ENCODE measurements at regions of chr10 and their contacts with region 1.

Region 1: DNA sequence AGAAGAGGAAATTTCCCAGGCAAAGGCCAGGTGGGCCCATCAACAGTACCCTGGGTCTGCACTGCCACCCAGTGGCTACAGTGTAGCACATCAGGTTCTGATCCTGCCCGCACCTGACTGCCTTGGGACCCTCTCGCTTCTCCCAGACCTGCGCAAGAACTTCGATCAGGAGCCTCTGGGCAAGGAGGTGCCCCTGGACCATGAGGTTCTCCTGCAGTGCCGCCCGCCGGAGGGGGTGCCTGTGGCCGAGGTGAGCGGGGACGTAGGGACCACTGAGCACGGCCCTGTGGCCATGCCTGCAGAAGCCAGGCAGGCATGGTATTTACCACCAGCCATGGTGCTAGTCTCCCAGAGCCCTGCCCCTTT is 33.9 kb upstream of the SLC29A3 start:
- DNase-seq: peak; percentile 39 to 68
- ATAC-seq: peak; percentile 75 to 92
- H3K4me3 ChIP-seq: no peak overlapping the region
- H3K27ac ChIP-seq: no peak overlapping the region
- H3K4me1 ChIP-seq: no peaks in the 10 kb centered on the region
- CTCF ChIP-seq: peak; percentile 81
- EP300 ChIP-seq: no peak
- POLR2A ChIP-seq: no peak
- RAD21 ChIP-seq: peak; percentile 82 to 86

Region 2: DNA sequence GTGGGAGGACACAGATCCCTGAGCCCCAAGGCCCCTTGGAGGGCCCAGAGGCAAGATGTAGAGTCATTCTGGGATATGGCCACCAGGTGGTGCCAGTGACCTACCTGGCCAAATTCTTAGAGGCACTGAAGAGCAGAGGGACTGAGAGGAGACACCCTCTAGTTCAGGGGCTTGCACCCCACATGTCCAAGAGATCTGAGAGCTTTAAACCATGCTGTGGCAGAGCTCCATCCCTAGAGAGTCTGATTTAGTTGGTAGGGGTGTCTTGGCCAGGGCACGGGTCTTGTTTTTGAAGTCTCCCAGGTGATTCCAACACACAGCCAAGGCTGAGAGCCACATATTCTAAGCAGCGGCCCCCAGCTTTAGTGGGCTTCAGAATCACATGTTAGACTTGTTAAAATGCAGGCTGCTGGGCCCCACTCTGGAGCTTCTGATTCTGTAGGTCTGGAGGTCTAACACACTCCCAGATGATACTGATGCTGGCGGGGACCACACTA is 735.2 kb before region 1 on chr10:
- CTCF ChIA-PET with region 1: interaction called, 10 read pairs
- POLR2A ChIA-PET with region 1: no interaction called
- DNase-seq: peak; percentile 60 to 78
- ATAC-seq: peak; percentile 84 to 95
- H3K4me3 ChIP-seq: no peak overlapping the region
- H3K27ac ChIP-seq: no peak overlapping the region
- H3K4me1 ChIP-seq: no peaks in the 10 kb centered on the region
- CTCF ChIP-seq: peak; percentile 87
- EP300 ChIP-seq: no peak
- POLR2A ChIP-seq: no peak
- RAD21 ChIP-seq: peak; percentile 89

Region 3: GRCh38 chr10:70887804-70888800 is 397.1 kb before region 1 on chr10 and contains the start of gene PCBD1:
- CTCF ChIA-PET with region 1: interaction called, 14 read pairs
- POLR2A ChIA-PET with region 1: no interaction called
- DNase-seq: peak; percentile 77 to 81
- ATAC-seq: peak; percentile 92 to 93
- H3K4me3 ChIP-seq: peak within 1 kb of the TSS; percentile 87
- H3K27ac ChIP-seq: peak within 1 kb of the TSS; percentile 94 to 98
- H3K4me1 ChIP-seq: peaks cover 20% of the 10 kb centered on the region
- CTCF ChIP-seq: no peak
- EP300 ChIP-seq: no peak
- POLR2A ChIP-seq: peak; percentile 85
- RAD21 ChIP-seq: no peak
- polyA plus RNA-seq, gene PCBD1: 169 TPM in 2 replicates

Region 4: DNA sequence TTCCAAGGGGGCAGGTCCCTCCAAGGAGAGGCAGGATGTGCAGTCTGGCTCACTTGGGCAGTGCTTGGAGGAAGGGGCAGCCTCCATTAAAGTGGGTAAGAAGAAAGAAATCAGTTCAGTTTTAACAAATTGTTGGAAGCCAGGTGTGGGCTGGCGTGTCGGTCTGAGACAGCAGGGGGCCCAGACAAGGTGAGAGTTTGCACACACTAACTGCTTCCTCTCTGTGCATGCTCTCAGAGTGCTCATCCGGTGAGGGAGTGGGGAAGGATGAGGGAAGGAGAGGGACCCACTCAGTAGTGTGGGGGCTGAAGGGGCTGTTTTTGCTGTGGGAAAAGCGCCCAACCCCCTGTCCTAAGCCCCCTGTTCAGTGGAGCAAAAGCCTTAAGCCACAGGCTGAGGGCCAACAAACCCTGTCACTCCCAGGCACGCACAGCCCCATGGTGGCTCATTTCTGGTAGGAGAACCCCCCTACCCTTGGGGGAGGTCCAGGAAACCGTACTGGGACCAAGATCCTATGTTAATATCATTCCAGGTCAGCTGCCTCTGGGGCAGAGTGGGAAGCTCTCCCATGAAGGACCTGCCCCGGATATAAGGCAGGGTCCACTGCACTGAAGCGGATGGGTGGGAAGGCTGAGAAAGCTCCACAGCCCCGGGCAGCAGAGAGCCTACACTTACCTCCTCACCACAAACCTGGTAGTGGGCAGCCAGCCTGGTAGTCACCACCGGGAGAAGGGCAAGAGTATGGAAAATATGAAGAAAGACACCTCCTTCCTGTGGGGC is 391.7 kb before region 1 on chr10:
- CTCF ChIA-PET with region 1: interaction called, 362 read pairs
- POLR2A ChIA-PET with region 1: no interaction called
- DNase-seq: no peak
- ATAC-seq: no peak
- H3K4me3 ChIP-seq: no peak overlapping the region
- H3K27ac ChIP-seq: no peak overlapping the region
- H3K4me1 ChIP-seq: peaks cover 12% of the 10 kb centered on the region
- CTCF ChIP-seq: no peak
- EP300 ChIP-seq: no peak
- POLR2A ChIP-seq: no peak
- RAD21 ChIP-seq: no peak

Region 5: DNA sequence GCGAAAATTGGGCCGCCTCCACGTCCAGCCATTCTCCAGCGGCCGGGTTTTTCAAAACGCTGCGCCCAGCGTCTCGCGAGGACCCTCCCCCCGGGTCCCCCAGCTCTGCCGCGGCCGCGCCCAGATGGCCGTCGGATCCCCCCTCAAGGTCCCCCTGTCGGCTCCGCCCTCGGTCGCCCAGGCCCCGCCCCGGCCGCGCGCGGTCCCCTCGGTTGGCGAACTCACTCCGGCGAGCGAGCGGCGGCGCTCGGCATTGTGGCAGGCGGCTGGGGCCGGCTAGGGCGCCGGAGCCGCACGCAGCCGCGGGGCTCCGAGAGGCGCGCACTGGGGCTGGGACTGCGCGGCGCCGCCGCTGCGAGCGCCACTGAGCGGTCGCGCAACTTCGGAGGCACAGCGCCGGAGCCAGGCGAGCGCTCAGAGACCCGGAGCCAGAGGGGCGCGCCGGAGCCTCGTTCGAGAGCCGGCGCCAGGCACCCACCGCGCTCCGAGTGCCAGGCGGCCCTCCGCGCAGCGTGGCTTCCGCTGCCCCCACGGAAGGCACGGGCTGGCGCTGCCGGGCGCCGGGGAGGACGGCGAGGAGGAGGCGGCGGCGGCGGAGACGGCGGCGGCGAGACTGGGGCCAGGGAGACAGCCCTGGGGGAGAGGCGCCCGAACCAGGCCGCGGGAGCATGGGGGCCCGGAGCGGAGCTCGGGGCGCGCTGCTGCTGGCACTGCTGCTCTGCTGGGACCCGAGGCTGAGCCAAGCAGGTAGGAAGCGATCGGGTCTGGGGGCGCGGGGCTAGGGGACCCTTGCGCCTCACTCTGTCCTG is 72.6 kb before region 1 on chr10 and contains the start of gene UNC5B:
- CTCF ChIA-PET with region 1: interaction called, 13 read pairs
- POLR2A ChIA-PET with region 1: no interaction called
- DNase-seq: peak; percentile 37 to 80
- ATAC-seq: peak; percentile 68 to 81
- H3K4me3 ChIP-seq: peak within 1 kb of the TSS; percentile 60
- H3K27ac ChIP-seq: peak within 1 kb of the TSS; percentile 31 to 79; a peak in 4 of 6 replicates
- H3K4me1 ChIP-seq: peaks cover 16% of the 10 kb centered on the region; the same call in 1 of the 3 replicates
- CTCF ChIP-seq: peak; percentile 25; the same call in 1 of the 3 replicates
- EP300 ChIP-seq: no peak
- POLR2A ChIP-seq: peak; percentile 64
- RAD21 ChIP-seq: no peak
- polyA plus RNA-seq, gene UNC5B: 1.0 and 1.3 TPM in 2 replicates

Region 6: GRCh38 chr10:71270301-71271220 is 14.6 kb before region 1 on chr10:
- CTCF ChIA-PET with region 1: interaction called, 70 read pairs
- POLR2A ChIA-PET with region 1: no interaction called
- DNase-seq: peak; percentile 72 to 91
- ATAC-seq: peak; percentile 80 to 90
- H3K4me3 ChIP-seq: no peak overlapping the region
- H3K27ac ChIP-seq: no peak overlapping the region
- H3K4me1 ChIP-seq: peaks cover 17% of the 10 kb centered on the region; the same call in 2 of the 3 replicates
- CTCF ChIP-seq: peak; percentile 62
- EP300 ChIP-seq: no peak
- POLR2A ChIP-seq: no peak
- RAD21 ChIP-seq: peak; percentile 32 to 45; a peak in 4 of 5 replicates

Region 7: DNA sequence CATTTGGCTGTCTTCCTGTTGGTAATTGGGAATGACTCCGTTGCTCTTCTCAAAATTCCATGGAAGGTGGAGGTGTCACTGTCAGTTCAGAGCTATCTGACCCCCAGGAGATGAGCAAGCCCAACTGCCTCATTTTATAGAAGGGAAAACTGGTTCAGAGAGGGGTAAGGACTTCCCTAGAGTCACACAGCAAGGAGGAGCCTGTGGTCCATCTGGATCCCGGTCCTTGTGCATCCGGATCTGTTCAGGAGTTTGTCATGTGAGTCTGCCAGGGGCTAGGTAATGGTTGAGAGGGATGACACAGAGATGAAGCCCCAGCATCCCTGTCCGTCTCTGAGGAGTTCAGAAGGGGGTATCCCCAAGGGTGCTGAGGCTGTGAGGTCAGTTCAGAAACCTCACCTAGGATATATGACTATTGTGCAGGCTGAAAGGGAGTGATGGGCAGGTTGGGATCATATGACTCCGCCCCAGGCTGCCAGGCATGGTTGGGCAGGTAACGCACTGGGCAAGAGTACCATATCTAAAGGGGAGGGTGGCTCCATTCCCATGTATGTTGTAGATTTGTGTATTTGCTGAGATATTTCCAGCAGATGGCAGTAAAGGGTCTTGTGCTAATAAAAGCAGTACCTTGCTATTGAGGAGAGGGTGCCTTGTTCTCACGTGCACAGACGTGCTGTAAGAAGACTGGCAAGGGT is 17.9 kb after region 1 on chr10:
- CTCF ChIA-PET with region 1: interaction called, 16 read pairs
- POLR2A ChIA-PET with region 1: no interaction called
- DNase-seq: peak; percentile 73
- ATAC-seq: peak; percentile 75 to 90
- H3K4me3 ChIP-seq: no peak overlapping the region
- H3K27ac ChIP-seq: no peak overlapping the region
- H3K4me1 ChIP-seq: no peaks in the 10 kb centered on the region
- CTCF ChIP-seq: peak; percentile 56
- EP300 ChIP-seq: no peak
- POLR2A ChIP-seq: no peak
- RAD21 ChIP-seq: peak; percentile 37 to 52; a peak in 4 of 5 replicates

Region 8: GRCh38 chr10:71396084-71396720 is 111.0 kb after region 1 on chr10:
- CTCF ChIA-PET with region 1: no interaction called
- POLR2A ChIA-PET with region 1: no interaction called
- DNase-seq: peak; percentile 75 to 76
- ATAC-seq: peak; percentile 86 to 94
- H3K4me3 ChIP-seq: peak overlapping the region; percentile 58
- H3K27ac ChIP-seq: peak overlapping the region; percentile 71 to 91
- H3K4me1 ChIP-seq: peaks cover 7% of the 10 kb centered on the region; the same call in 1 of the 3 replicates
- CTCF ChIP-seq: peak; percentile 77
- EP300 ChIP-seq: no peak
- POLR2A ChIP-seq: no peak
- RAD21 ChIP-seq: peak; percentile 80 to 92

Region 9: GRCh38 chr10:71597821-71598498 is 312.8 kb after region 1 on chr10:
- CTCF ChIA-PET with region 1: no interaction called
- POLR2A ChIA-PET with region 1: no interaction called
- DNase-seq: no peak
- ATAC-seq: peak; percentile 21 to 33; a peak in 3 of 6 replicates
- H3K4me3 ChIP-seq: no peak overlapping the region
- H3K27ac ChIP-seq: peak overlapping the region in 1 of 2 experiments; percentile 51; a peak in 2 of 6 replicates
- H3K4me1 ChIP-seq: peaks cover 15% of the 10 kb centered on the region; the same call in 1 of the 3 replicates
- CTCF ChIP-seq: no peak
- EP300 ChIP-seq: no peak
- POLR2A ChIP-seq: no peak
- RAD21 ChIP-seq: no peak

Measured in A549 (cell line).